ENCODE measurements at regions of chr3 and their contacts with region 1.

Region 1: DNA sequence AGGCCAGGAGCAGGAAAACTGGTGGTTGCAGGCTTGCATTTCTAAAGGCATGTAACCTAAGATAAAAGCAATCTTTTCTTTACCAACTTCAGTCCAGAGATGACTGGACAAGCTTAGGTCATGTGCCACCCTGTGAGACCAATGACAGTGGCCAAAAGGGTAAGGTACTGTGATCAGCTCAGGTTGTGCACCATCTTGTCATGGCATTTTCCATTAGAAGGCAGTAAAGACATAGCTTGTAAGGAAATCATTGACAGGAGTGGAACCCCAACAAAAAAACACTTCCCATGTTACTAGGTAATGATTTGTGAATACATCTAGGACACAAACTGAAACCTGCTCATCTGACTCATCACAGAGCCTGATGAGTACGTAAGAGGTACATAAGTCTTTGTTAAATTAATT is 35.2 kb downstream of the SSR3 start:
- DNase-seq: no peak
- H3K4me3 ChIP-seq: no peak overlapping the region
- H3K4me3 Mint-ChIP-seq: no peak overlapping the region
- H3K27ac ChIP-seq: no peak overlapping the region
- H3K27ac Mint-ChIP-seq: no peak overlapping the region
- H3K4me1 ChIP-seq: peaks cover 2% of the 10 kb centered on the region
- H3K4me1 Mint-ChIP-seq: peaks cover 7 to 12% (median 10%) of the 10 kb centered on the region in 4 donors
- H3K27me3 ChIP-seq: no peaks in the 10 kb centered on the region
- H3K27me3 Mint-ChIP-seq: peaks cover 7 to 8% of the 10 kb centered on the region in 2 donors

Region 2: DNA sequence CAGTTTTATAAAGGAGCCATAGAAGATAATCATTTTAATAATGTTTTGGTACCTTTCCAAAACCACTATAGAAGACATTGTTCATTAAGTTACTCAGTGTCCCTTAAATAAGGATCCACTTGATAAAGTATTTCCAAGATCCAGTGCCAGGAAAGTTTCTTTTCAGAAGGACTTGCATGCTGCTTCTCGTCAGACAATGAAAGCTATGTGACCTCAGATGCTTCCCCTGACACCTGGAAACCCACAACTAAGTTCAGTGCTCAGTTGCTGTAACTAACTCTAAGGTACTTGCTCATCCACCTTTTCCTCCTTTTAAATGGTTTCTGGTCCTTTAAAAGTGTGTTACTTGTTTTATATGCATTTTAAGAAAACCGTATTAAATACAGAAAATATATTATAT is 27.9 kb after region 1 on chr3:
- CTCF ChIA-PET with region 1: interaction called, 28 read pairs
- POLR2A ChIA-PET with region 1: interaction called, 5 read pairs
- intact Hi-C with region 1: no loop called
- DNase-seq: no peak
- H3K4me3 ChIP-seq: no peak overlapping the region
- H3K4me3 Mint-ChIP-seq: no peak overlapping the region
- H3K27ac ChIP-seq: no peak overlapping the region
- H3K27ac Mint-ChIP-seq: peak overlapping the region in 3 of 7 donors; percentile 20 to 84 (median 40)
- H3K4me1 ChIP-seq: peaks cover 20% of the 10 kb centered on the region
- H3K4me1 Mint-ChIP-seq: peaks cover 32 to 53% (median 43%) of the 10 kb centered on the region in 4 donors
- H3K27me3 ChIP-seq: no peaks in the 10 kb centered on the region
- H3K27me3 Mint-ChIP-seq: no peaks in the 10 kb centered on the region

Region 3: DNA sequence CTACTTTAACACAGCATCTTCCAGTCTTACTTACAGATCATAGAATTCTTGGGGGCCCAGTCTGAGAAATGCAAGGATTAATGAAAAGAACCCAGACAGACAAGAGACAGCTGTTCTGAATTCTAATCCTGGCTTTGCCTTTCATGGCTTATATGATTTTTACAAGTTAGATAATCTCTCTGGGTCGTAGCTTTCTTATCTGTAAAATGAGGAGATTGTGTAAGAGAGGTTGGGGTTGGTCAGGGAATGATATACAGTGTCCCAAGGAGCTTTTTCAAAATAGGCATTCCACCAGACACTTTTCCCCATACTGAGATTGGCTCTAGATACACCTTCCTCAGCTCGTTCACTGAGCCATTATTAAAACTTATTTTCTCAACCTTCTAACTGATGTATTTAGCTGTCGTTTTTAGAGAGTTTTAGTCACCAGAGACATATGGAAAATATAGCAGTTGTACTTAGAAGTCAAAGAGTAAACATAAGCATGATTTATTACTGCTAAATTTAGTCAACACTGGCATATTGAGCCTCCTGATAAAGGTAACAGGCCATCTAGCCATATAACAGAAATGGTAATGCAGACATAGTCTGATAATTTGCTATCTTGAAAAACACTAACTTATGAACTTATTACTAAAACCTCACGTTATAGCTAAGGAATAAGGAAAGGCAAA is 1888.2 kb after region 1 on chr3:
- CTCF ChIA-PET with region 1: no interaction called
- POLR2A ChIA-PET with region 1: no interaction called
- intact Hi-C with region 1: no loop called
- DNase-seq: no peak
- H3K4me3 ChIP-seq: no peak overlapping the region
- H3K4me3 Mint-ChIP-seq: no peak overlapping the region
- H3K27ac ChIP-seq: no peak overlapping the region
- H3K27ac Mint-ChIP-seq: no peak overlapping the region
- H3K4me1 ChIP-seq: no peaks in the 10 kb centered on the region
- H3K4me1 Mint-ChIP-seq: peaks cover 0 to 2% (median under 1%) of the 10 kb centered on the region in 4 donors
- H3K27me3 ChIP-seq: no peaks in the 10 kb centered on the region
- H3K27me3 Mint-ChIP-seq: no peaks in the 10 kb centered on the region